HepG2 (cell line): ENCODE measurements at regions of chr6 and their contacts with region 1.

Region 1: DNA sequence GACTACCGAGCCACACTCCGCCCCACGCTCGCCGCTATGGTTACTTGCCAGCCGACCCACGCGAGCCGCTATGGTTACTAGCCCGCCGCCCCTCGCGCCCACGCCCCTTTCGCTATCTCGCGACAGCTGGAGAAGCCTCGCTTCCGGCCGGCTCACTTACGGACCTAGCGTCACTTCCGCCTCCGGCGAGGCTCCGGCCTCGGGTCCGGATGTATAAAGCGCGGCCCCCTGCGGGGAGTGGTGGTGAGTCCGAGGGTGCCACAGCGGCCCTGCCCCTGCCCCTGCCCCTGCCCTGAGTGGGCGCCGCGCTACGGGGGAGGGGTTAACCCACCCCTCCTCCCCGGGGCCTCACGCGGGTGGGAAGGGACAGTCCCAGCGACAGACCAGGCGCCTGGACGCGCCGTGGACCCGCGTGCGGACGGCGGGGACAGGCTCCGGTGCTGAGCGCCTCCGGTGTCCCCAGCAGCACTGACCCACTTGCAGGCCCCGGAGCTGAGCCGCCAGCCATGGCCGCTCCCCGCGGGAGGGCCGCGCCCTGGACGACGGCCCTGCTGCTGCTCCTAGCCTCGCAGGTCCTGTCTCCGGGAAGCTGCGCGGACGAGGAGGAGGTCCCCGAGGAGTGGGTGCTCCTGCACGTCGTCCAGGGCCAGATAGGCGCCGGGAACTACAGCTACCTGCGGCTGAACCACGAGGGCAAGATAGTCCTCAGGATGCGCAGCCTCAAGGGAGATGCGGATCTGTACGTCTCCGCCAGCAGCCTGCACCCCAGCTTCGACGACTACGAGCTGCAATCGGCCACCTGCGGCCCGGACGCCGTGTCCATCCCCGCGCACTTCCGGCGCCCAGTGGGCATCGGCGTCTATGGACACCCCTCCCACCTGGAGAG is at the starts of genes C6orf120 and WDR27:
- DNase-seq: peak; percentile 96
- ATAC-seq: peak; percentile 95
- H3K4me3 ChIP-seq: peak within 1 kb of the TSS; percentile 82 to 98 (median 87)
- H3K27ac ChIP-seq: peak within 1 kb of the TSS; percentile 93
- H3K4me1 ChIP-seq: peaks cover 45% of the 10 kb centered on the region
- H3K27me3 ChIP-seq: no peaks in the 10 kb centered on the region; a peak in 1 of 5 replicates
- CTCF ChIP-seq: peak; percentile 54
- EP300 ChIP-seq: 0 out of 4 replicates have a peak, but pooled peaks of 1 of the 2 experiments have one; percentile 41
- POLR2A ChIP-seq: peak; percentile 87 to 96
- RAD21 ChIP-seq: peak; percentile 30; the same call in 1 of the 2 replicates
- total RNA-seq, gene C6orf120: 24.9 and 29.9 TPM in 2 replicates
- total RNA-seq, gene WDR27: 10.0 and 34.1 TPM in 2 replicates

Region 2: GRCh38 chr6:168956884-168957730 is 745.1 kb before region 1 on chr6:
- CTCF ChIA-PET with region 1: no interaction called
- POLR2A ChIA-PET with region 1: no interaction called
- in situ Hi-C with region 1: loop called (anchors 25 kb)
- intact Hi-C with region 1: loop called (anchors 10 kb)
- DNase-seq: peak; percentile 67
- ATAC-seq: peak; percentile 99
- H3K4me3 ChIP-seq: no peak overlapping the region
- H3K27ac ChIP-seq: no peak overlapping the region
- H3K4me1 ChIP-seq: no peaks in the 10 kb centered on the region
- H3K27me3 ChIP-seq: peaks cover 2 to 23% of the 10 kb centered on the region in 2 experiments; a peak in 3 of 5 replicates
- CTCF ChIP-seq: peak; percentile 92
- EP300 ChIP-seq: no peak
- POLR2A ChIP-seq: no peak
- RAD21 ChIP-seq: peak; percentile 86

Region 3: DNA sequence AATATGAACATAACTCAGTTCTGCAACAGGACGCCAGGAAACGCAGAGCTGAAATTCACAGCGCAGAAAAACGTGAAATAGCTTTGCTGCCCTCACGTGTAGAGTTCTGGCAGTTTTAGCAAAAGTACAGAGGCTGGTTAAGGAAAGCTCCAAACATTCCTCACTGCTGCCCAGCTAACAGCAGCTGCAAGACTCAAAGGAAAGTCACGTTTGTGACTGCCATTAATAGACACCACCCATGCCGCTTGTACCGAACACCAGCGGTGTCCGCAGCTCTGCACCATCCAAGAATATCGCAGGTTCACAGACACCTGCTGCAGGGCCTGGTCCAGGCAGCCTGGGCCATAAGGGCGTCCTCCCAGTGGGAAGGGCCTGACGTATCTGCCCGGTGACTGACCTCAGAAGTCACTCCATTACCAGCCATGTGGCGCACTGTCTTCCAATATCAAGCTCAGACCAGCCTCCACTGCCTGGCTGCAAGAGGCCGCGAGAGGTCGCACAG is 61.8 kb before region 1 on chr6:
- CTCF ChIA-PET with region 1: no interaction called
- POLR2A ChIA-PET with region 1: no interaction called
- in situ Hi-C with region 1: no loop called
- intact Hi-C with region 1: no loop called
- DNase-seq: no peak
- ATAC-seq: peak; percentile 26
- H3K4me3 ChIP-seq: no peak overlapping the region
- H3K27ac ChIP-seq: no peak overlapping the region
- H3K4me1 ChIP-seq: no peaks in the 10 kb centered on the region
- H3K27me3 ChIP-seq: no peaks in the 10 kb centered on the region
- CTCF ChIP-seq: no peak
- EP300 ChIP-seq: no peak
- POLR2A ChIP-seq: no peak
- RAD21 ChIP-seq: no peak

Region 4: DNA sequence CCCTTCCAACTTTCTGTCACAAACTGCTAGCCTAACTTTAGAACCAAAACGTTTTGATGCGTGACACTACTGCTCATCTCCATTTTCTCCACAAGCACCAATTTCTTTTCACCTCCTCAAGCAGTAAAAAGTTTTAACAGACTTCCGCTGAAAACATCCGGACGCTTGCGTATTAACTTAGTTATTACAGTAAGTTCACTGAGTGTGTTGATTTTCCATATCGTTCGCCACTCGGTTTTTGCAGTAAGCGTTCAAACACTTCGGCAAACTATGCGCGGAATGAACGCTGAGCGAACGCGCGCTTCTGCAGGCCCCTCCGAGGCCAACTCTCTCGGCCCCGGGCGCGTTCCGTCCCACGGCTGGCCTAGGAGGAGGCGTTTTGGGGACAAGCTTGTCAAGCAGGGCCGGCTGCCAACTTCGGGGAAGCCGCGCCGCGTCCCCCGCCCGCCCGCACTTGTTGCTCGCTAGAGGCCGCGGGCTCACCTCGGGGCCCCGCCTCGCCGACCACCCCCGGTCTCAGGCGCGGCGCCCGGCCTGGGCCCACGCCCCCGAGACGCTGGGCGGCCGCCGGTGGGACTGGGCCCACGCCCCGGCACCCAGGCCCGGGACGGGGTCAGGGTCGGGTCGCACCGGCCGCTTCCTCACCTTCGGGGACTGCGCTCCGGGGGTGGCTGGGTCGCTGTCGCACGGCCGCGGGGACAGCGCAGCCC is 21.2 kb after region 1 on chr6:
- CTCF ChIA-PET with region 1: no interaction called
- POLR2A ChIA-PET with region 1: interaction called, 81 read pairs
- in situ Hi-C with region 1: no loop called
- intact Hi-C with region 1: loop called (anchors 2 kb)
- DNase-seq: peak; percentile 39
- ATAC-seq: peak; percentile 20
- H3K4me3 ChIP-seq: peak overlapping the region; percentile 82 to 93 (median 90)
- H3K27ac ChIP-seq: peak overlapping the region; percentile 72
- H3K4me1 ChIP-seq: peaks cover 60% of the 10 kb centered on the region
- H3K27me3 ChIP-seq: no peaks in the 10 kb centered on the region; a peak in 1 of 5 replicates
- CTCF ChIP-seq: 0 out of 2 replicates have a peak, but pooled peaks have one; percentile 10
- EP300 ChIP-seq: no peak
- POLR2A ChIP-seq: no peak
- RAD21 ChIP-seq: peak; percentile 28; the same call in 1 of the 2 replicates

Region 5: DNA sequence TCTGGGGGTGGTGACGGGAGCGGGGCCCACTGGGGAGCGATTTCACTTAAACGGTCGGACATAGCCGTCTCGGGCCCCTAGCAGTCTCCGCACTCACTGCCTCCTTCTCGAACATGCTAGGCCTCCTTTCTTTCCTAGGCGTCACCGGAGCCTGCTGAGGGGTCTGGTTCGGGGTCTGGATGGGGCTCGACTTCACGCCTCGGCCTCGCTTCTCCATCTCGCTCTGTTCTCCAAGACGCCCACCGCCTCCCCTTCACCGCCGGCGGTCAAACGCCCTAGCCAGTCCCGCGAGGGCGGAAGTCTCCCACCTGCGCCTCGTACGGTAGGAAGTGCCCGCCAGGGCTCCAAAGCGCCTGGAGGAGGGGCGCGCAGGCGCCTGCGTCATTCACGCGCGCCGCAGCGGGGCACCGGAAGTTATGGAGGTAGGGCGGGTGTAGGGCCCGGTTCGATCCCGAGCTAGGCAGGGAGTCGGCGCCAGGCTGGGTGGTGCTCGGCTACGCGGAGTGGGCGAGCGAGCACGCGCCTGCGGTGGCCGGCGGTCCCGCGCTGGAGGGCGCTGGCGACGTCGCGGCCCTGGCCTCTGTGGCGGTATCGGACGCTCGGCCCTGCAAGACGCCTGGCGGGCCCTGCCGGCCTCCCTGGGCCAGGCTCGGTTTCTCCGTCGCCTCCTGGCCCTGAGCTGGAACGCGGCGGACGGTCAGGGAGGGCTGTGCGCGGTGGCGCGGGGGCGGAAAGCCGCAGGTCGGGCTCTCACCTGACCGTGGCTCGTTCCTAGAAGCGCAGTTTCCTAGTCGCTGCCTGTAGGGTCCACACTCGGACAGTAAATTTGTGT is 49.3 kb after region 1 on chr6 and contains the starts of genes DYNLT2 and ERMARD:
- CTCF ChIA-PET with region 1: no interaction called
- POLR2A ChIA-PET with region 1: interaction called, 35 read pairs
- in situ Hi-C with region 1: no loop called
- intact Hi-C with region 1: loop called (anchors 1 kb)
- DNase-seq: peak; percentile 96
- ATAC-seq: peak; percentile 95
- H3K4me3 ChIP-seq: peak within 1 kb of the TSS; percentile 88 to 91 (median 90)
- H3K27ac ChIP-seq: peak within 1 kb of the TSS; percentile 96
- H3K4me1 ChIP-seq: peaks cover 48% of the 10 kb centered on the region
- H3K27me3 ChIP-seq: no peaks in the 10 kb centered on the region; a peak in 1 of 5 replicates
- CTCF ChIP-seq: peak; percentile 52
- EP300 ChIP-seq: peak in 1 of 2 experiments; percentile 68; a peak in 3 of 4 replicates
- POLR2A ChIP-seq: peak; percentile 90 to 99
- RAD21 ChIP-seq: peak; percentile 88
- total RNA-seq, gene DYNLT2: 3.1 and 4.3 TPM in 2 replicates
- total RNA-seq, gene ERMARD: 8.4 and 10.7 TPM in 2 replicates

Region 6: DNA sequence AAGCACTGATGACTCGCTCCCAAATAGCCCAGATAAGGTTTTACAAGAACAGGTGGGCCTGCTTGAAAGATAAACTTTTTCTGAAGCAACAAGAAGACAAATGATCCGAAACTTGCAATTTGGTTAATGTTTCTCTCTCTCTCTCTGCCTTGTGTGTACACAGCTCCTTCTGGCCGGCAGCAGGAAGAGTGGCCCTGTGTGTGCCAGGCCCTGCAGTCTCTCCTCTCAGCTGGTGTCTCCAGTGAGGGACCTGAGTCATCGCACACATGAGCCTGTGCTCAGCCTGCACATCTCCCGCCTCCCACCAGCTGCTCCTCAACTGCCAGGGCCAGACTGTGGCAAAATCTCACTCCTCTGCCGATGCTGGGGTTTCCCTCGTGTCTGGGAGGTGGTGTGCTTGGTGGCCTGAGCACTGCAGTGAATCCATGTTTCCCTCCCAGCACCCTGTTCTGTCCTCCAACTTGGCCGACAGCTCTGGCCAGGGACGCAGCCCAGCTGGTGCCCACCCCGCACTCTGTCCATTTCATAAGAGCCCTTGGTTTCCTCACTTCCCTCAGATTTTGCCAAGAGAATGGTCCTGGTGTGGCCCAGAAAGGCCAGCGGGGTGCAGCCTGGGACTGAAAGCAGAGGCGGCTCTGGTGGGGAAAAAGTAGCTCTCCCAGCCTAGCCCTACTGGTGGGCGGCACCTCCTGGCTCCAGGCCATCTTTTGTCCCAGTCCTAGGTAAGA is 98.6 kb after region 1 on chr6:
- CTCF ChIA-PET with region 1: no interaction called
- POLR2A ChIA-PET with region 1: interaction called, 18 read pairs
- in situ Hi-C with region 1: no loop called
- intact Hi-C with region 1: no loop called
- DNase-seq: peak; percentile 91
- ATAC-seq: peak; percentile 88
- H3K4me3 ChIP-seq: peak overlapping the region; percentile 41 to 74 (median 51)
- H3K27ac ChIP-seq: peak overlapping the region; percentile 82
- H3K4me1 ChIP-seq: peaks cover 80% of the 10 kb centered on the region
- H3K27me3 ChIP-seq: no peaks in the 10 kb centered on the region
- CTCF ChIP-seq: 0 out of 2 replicates have a peak, but pooled peaks have one; percentile 11
- EP300 ChIP-seq: peak; percentile 72 to 91
- POLR2A ChIP-seq: peak; percentile 55 to 72
- RAD21 ChIP-seq: no peak; the same call in 1 of the 2 replicates

Region 7: GRCh38 chr6:169992361-169993250 is 290.4 kb after region 1 on chr6:
- CTCF ChIA-PET with region 1: no interaction called
- POLR2A ChIA-PET with region 1: no interaction called
- in situ Hi-C with region 1: no loop called
- intact Hi-C with region 1: no loop called
- DNase-seq: no peak
- ATAC-seq: peak; percentile 38
- H3K4me3 ChIP-seq: no peak overlapping the region
- H3K27ac ChIP-seq: no peak overlapping the region
- H3K4me1 ChIP-seq: no peaks in the 10 kb centered on the region
- H3K27me3 ChIP-seq: peaks cover 0 to 30% of the 10 kb centered on the region in 2 experiments; a peak in 3 of 5 replicates
- CTCF ChIP-seq: no peak
- EP300 ChIP-seq: no peak
- POLR2A ChIP-seq: no peak
- RAD21 ChIP-seq: no peak

Region 8: DNA sequence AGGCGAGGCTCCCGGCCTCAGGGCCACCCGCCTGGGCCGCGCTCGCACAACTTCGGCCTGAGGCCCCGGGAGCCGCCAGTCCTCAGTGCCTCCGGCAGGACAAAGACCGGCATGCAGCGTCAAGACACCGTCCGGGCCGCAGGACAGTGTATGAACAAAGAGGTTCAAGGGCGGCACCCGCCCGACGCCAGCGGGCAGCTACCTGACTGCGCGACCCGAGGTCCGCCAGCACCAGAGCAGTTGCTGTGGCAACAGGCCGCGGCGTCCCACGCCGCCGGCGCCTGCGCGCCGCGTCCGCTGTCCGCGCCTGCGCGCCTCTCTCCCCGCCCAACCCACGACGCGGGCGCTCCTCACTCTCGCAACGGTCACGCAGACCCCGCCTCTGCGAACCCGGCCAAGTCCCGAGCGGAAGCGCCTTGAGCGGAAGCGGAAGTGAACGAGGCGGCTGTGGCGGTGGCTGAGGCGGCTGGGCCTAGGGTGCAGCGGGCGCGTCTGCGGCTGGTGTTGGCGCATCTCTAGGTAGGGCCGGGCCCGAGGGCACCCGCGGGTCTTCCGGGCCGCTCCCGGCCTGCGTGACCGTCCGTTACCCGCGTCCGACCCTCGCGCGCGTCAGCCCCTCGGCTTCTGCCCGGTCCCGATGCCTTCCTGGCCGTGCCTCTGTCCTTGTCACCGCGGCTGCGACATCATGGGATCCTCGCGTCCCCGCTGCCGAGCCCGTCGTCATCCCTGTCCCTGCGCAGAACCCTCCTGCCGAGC is 604.3 kb after region 1 on chr6 and contains the start of gene FAM120B:
- CTCF ChIA-PET with region 1: no interaction called
- POLR2A ChIA-PET with region 1: no interaction called
- in situ Hi-C with region 1: no loop called
- intact Hi-C with region 1: loop called (anchors 5 kb)
- DNase-seq: peak; percentile 94
- ATAC-seq: peak; percentile 97
- H3K4me3 ChIP-seq: peak within 1 kb of the TSS; percentile 78 to 98 (median 92)
- H3K27ac ChIP-seq: peak within 1 kb of the TSS; percentile 67
- H3K4me1 ChIP-seq: peaks cover 28% of the 10 kb centered on the region
- H3K27me3 ChIP-seq: no peaks in the 10 kb centered on the region; a peak in 1 of 5 replicates
- CTCF ChIP-seq: peak; percentile 24; the same call in 1 of the 2 replicates
- EP300 ChIP-seq: 0 out of 4 replicates have a peak, but pooled peaks of 1 of the 2 experiments have one; percentile 10
- POLR2A ChIP-seq: peak; percentile 97 to 99
- RAD21 ChIP-seq: peak; percentile 63
- total RNA-seq, gene FAM120B: 10.7 and 18.3 TPM in 2 replicates

Region 9: DNA sequence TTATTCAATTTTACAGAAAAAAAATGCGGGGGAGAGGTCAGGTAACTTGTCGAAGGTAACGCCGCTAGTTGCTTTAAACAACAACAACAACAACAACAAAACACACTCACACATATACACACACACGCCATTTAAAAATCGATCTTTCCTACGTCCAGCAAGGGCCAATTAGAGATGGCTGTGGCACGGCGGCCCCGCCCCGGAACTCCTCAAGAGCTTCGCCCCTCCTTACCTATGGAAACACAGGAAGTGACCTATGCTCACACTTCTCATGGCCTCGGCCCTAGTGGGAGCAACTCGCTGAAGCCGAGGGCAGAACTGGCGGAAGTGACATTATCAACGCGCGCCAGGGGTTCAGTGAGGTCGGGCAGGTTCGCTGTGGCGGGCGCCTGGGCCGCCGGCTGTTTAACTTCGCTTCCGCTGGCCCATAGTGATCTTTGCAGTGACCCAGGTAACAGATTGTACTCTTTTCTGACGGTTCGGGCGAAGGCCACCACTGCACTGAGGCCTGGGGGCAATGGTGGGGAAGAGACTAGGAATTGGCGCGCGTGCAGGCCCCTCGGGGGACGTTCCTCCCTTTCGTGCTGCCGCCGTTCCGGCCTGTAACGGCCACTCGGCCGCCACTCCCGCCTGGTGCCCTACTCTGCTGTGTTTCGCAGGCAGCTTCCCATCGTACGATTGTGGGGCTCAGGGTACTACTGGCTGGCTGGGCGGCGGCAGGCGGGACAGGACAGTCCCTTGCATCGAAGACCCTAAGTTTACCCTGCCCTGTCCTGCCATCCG is 852.0 kb after region 1 on chr6 and contains the start of gene TBP:
- CTCF ChIA-PET with region 1: no interaction called
- POLR2A ChIA-PET with region 1: interaction called, 12 read pairs
- in situ Hi-C with region 1: no loop called
- intact Hi-C with region 1: loop called (anchors 5 kb)
- DNase-seq: peak; percentile 100
- ATAC-seq: peak; percentile 92
- H3K4me3 ChIP-seq: peak within 1 kb of the TSS; percentile 98 to 99 (median 98)
- H3K27ac ChIP-seq: peak within 1 kb of the TSS; percentile 95
- H3K4me1 ChIP-seq: peaks cover 51% of the 10 kb centered on the region
- H3K27me3 ChIP-seq: peaks cover 0 to 5% of the 10 kb centered on the region in 2 experiments; a peak in 1 of 5 replicates
- CTCF ChIP-seq: peak; percentile 26; the same call in 1 of the 2 replicates
- EP300 ChIP-seq: peak in 1 of 2 experiments; percentile 40; a peak in 2 of 4 replicates
- POLR2A ChIP-seq: peak; percentile 75 to 93
- RAD21 ChIP-seq: peak; percentile 40; the same call in 1 of the 2 replicates
- total RNA-seq, gene TBP: 21.7 and 25.9 TPM in 2 replicates